ENCODE measurements at regions of chr11 and their contacts with region 1.

Region 1: DNA sequence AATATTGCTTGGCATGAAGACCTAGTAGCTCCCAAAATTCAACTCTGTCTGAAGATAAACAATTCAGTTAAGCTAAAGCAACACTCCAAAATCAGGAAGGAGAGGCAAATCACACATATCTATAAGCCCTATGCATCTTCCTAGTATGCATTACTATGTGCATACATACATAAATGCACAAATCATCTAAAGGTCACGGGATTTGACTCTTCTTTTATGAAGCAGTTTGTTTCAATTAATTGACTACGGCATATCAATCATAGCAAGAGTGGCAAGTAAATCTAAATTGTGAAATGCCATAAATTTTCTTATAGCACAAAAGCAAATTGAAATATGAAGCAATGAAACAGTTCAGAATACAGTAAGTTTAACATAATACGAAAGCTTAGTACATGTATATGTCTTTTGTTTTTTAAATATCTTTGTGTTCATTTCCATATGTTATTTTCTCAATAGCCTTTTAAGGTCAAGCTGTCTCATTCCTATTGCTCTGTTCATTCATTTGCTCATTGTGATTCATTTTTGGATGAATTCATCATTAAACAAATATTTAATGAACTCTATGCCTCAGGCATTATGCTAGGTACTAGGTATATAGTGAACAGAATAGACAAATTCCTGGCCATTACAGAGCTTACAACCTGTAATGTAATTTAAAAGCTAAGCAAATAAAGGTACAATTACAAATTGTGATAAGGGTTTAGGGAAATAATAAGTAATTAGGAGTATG is 540.4 kb downstream of the DLG2 start:
- DNase-seq: no peak
- ATAC-seq: no peak
- H3K4me3 ChIP-seq: no peak overlapping the region
- H3K4me3 Mint-ChIP-seq: no peak overlapping the region
- H3K27ac ChIP-seq: no peak overlapping the region
- H3K27ac Mint-ChIP-seq: no peak overlapping the region
- H3K4me1 ChIP-seq: peaks cover 16 to 21% of the 10 kb centered on the region in 2 donors
- H3K4me1 Mint-ChIP-seq: peaks cover 38% of the 10 kb centered on the region
- H3K27me3 ChIP-seq: no peaks in the 10 kb centered on the region
- H3K27me3 Mint-ChIP-seq: no peaks in the 10 kb centered on the region
- CTCF ChIP-seq: no peak

Region 2: DNA sequence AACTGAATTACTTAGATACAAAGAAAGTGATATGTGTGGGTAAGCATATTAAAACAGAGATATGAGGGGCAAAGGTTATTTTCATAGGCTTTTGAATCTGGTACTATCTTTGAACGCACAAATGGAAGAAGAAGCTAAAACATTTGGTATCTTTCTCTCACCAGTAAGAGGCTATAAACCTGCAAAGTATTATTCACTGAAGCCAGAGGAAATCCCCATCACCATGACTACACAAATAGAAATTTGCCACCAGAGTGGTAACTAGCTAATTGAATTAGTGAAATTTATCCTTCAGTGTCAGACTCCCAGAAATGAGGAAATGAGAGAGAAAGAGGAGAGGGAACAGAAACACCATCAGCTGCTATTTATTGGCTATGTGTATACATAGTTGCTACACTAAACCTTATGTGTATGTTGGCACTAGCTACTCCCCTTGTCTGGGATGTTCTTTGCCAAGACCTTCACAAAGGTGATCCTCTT is 37.1 kb after region 1 on chr11:
- CTCF ChIA-PET with region 1: no interaction called
- POLR2A ChIA-PET with region 1: no interaction called
- intact Hi-C with region 1: loop called (anchors 5 kb)
- DNase-seq: peak; percentile 82
- ATAC-seq: peak; percentile 88
- H3K4me3 ChIP-seq: no peak overlapping the region
- H3K4me3 Mint-ChIP-seq: peak overlapping the region; percentile 40
- H3K27ac ChIP-seq: peak overlapping the region; percentile 57 to 69
- H3K27ac Mint-ChIP-seq: peak overlapping the region; percentile 38
- H3K4me1 ChIP-seq: peaks cover 0 to 8% of the 10 kb centered on the region in 2 donors
- H3K4me1 Mint-ChIP-seq: peaks cover 18% of the 10 kb centered on the region
- H3K27me3 ChIP-seq: no peaks in the 10 kb centered on the region
- H3K27me3 Mint-ChIP-seq: no peaks in the 10 kb centered on the region
- CTCF ChIP-seq: no peak

Region 3: DNA sequence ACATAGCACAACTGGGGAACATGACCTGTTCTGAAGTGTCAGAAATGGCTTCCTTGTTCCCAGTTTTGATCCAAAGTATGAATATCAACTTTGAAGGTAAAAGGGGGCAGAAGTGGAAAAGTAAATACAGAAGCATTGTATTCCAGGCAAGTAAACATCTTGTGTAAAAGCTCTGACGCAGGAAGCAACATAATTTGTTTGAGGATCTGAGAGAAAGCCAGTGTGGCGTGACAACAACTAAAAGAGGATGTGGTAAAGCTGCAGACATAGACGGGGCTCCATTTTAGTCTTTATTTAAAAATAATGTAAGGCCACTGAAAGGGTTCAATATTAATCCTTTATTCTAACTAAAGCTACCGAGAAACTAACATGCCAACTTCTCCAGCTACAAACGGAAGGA is 230.3 kb after region 1 on chr11:
- CTCF ChIA-PET with region 1: no interaction called
- POLR2A ChIA-PET with region 1: no interaction called
- intact Hi-C with region 1: loop called (anchors 10 kb)
- DNase-seq: peak; percentile 84
- ATAC-seq: peak; percentile 90
- H3K4me3 ChIP-seq: peak overlapping the region in 2 of 5 experiments; percentile 5 to 29
- H3K4me3 Mint-ChIP-seq: peak overlapping the region; percentile 52
- H3K27ac ChIP-seq: peak overlapping the region; percentile 69 to 74
- H3K27ac Mint-ChIP-seq: peak overlapping the region; percentile 80
- H3K4me1 ChIP-seq: peaks cover 39 to 41% of the 10 kb centered on the region in 2 donors
- H3K4me1 Mint-ChIP-seq: peaks cover 54% of the 10 kb centered on the region
- H3K27me3 ChIP-seq: no peaks in the 10 kb centered on the region
- H3K27me3 Mint-ChIP-seq: no peaks in the 10 kb centered on the region
- CTCF ChIP-seq: no peak